Endothelial cell of umbilical vein (primary cell): ENCODE measurements at regions of chr7 and their contacts with region 1.

Region 1: DNA sequence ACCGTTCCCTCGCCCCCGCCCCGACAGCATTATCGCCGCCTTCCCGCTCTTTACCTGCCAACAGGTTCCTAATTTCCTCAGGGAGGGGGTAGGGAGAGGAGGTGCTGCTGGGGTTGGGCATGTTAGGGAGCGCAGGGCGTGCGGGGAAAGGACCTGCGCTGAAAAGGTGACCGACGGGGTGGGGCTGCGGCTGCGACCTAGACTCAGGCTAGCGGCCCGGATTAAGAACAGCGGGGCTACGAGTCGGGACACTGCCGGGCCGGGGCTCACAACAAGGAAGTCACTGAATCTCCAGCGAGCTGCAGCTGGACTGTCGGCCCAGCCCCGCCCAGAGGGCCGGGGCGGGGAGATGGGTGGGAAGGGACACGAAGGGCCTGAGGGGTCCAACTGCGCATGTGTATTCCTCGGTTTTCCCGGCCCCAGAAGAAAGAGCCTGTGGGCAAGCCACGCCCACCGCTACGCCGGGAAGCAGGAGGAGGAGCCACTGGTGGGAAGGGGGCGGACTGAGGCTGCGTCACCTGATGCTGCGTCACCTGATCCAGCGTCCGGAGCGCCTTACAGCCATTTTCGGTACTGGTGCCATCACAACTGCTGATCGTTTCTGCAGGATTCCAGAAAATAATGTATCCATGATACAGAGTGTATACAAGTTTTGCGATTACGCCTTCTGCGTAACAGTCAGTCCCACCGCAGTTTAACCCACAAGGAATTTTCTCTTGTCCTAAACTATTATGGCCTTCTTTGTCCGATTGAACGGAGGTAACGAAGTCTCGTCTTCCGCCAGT is at the start of gene SKAP2:
- DNase-seq: peak; percentile 99
- H3K4me3 ChIP-seq: peak within 1 kb of the TSS; percentile 59 to 85 (median 72)
- H3K27ac ChIP-seq: peak within 1 kb of the TSS; percentile 90
- H3K4me1 ChIP-seq: peaks cover 15% of the 10 kb centered on the region
- H3K27me3 ChIP-seq: no peaks in the 10 kb centered on the region
- CTCF ChIP-seq: no peak
- POLR2A ChIP-seq: peak; percentile 99
- total RNA-seq, gene SKAP2: 27.6 and 30.5 TPM in 2 replicates

Region 2: GRCh38 chr7:25862260-25863037 is 1002.1 kb before region 1 on chr7:
- CTCF ChIA-PET with region 1: no interaction called
- POLR2A ChIA-PET with region 1: no interaction called
- dilution Hi-C with region 1: no loop called
- intact Hi-C with region 1: loop called (anchors 5 kb)
- DNase-seq: peak; percentile 100
- H3K4me3 ChIP-seq: peak overlapping the region in 1 of 3 experiments; percentile 43
- H3K27ac ChIP-seq: no peak overlapping the region
- H3K4me1 ChIP-seq: peaks cover 6% of the 10 kb centered on the region
- H3K27me3 ChIP-seq: peaks cover 60 to 83% of the 10 kb centered on the region in 2 experiments
- CTCF ChIP-seq: no peak
- POLR2A ChIP-seq: no peak

Region 3: DNA sequence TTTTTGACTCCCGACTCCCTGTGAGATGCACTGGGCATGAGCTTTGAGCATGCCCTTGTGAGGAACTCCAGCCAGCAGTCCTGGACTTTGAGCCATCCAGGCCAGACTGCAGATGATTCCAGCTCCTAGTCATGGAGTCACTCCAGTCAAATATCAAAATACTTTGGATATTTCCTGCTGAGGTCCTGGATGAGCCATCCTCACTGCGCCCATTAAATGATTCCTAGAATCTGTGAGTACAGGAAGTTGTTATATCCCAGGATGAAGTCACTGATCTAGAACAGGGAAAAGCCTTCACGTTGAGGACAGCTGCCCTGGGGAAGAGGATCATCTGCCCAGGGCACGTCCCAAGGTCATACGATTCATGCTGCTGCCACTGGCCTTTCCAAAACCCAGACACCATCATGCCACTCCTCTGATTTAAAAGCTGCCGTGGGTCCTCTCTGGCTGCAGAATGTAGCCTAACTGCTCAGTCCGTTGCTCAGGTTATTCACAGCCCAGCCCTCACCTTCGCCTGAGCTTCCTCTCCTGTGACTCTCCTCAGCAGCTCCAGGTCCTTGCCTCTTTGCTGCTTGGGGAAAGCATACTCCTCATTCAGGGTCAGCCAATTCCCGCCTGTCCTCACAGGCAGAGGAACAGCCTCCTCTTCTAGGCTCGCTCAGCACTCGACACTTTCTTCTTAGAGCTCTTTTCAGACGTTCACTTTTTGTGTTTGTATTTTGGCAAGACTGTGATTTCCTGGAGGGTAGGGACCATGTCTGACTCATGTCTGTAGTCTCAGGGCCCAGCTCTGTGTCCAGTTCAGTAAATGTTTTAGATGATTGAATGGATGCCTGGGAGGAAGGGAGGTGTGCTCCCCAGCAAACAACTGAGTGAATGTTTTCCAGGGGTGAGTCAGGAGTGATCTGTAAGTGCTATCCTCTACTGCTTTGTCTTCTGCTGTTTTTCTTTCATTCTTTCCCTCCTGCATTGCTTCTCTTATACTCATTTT is 415.0 kb before region 1 on chr7:
- CTCF ChIA-PET with region 1: no interaction called
- POLR2A ChIA-PET with region 1: no interaction called
- dilution Hi-C with region 1: no loop called
- intact Hi-C with region 1: loop called (anchors 5 kb)
- DNase-seq: peak; percentile 96
- H3K4me3 ChIP-seq: no peak overlapping the region
- H3K27ac ChIP-seq: peak overlapping the region; percentile 80
- H3K4me1 ChIP-seq: peaks cover 37% of the 10 kb centered on the region
- H3K27me3 ChIP-seq: no peaks in the 10 kb centered on the region
- CTCF ChIP-seq: no peak
- POLR2A ChIP-seq: peak; percentile 54

Region 4: GRCh38 chr7:26853788-26854393 is 10.6 kb before region 1 on chr7:
- CTCF ChIA-PET with region 1: interaction called, 5 read pairs
- POLR2A ChIA-PET with region 1: interaction called, 5 read pairs
- dilution Hi-C with region 1: no loop called
- intact Hi-C with region 1: loop called (anchors 1 kb)
- DNase-seq: peak; percentile 69
- H3K4me3 ChIP-seq: no peak overlapping the region
- H3K27ac ChIP-seq: no peak overlapping the region
- H3K4me1 ChIP-seq: peaks cover 34% of the 10 kb centered on the region
- H3K27me3 ChIP-seq: no peaks in the 10 kb centered on the region
- CTCF ChIP-seq: peak; percentile 24 to 26
- POLR2A ChIP-seq: no peak

Region 5: DNA sequence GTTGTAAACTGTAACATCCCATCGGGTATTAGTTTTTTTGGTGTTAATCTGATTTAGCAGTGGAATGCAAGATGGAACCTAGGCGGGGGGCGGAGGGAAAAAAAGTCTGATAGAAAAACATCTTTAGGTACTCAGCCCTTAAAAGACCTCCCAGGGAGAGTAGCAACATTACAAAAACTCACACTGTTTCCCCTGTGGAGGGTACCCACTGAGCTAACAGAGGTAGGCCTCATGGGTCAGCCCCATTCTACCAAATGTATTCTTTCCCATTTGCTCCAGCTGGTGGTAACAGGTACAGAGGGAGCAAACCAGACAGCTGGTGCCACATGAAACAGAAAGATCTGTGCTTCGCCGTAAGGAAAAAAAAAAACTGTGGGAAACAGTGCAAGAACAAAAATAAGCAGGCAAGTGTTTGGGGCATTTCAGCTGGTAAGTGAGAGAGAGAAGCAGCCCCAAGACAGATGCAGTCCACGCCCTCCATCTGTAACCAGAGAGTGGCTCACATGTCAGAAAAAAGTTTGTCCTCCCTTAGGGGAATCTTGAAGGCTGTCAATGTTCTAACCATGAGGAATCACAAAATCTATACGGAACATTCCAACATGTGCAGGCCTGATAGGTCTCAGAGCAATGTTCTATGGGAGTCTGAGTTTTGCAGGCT is 166.0 kb after region 1 on chr7:
- CTCF ChIA-PET with region 1: no interaction called
- POLR2A ChIA-PET with region 1: no interaction called
- dilution Hi-C with region 1: no loop called
- intact Hi-C with region 1: no loop called
- DNase-seq: no peak
- H3K4me3 ChIP-seq: no peak overlapping the region
- H3K27ac ChIP-seq: no peak overlapping the region
- H3K4me1 ChIP-seq: peaks cover 10% of the 10 kb centered on the region
- H3K27me3 ChIP-seq: no peaks in the 10 kb centered on the region
- CTCF ChIP-seq: no peak
- POLR2A ChIP-seq: no peak

Region 6: GRCh38 chr7:27095897-27096767 is 231.6 kb after region 1 on chr7 and contains the start of gene HOXA1:
- CTCF ChIA-PET with region 1: interaction called, 124 read pairs
- POLR2A ChIA-PET with region 1: interaction called, 3 read pairs
- dilution Hi-C with region 1: no loop called
- intact Hi-C with region 1: loop called (anchors 1 kb)
- DNase-seq: peak; percentile 95
- H3K4me3 ChIP-seq: peak within 1 kb of the TSS; percentile 80 to 92 (median 86)
- H3K27ac ChIP-seq: peak within 1 kb of the TSS; percentile 93
- H3K4me1 ChIP-seq: peaks cover 48% of the 10 kb centered on the region
- H3K27me3 ChIP-seq: no peaks in the 10 kb centered on the region
- CTCF ChIP-seq: peak in 1 of 2 donors; percentile 10
- POLR2A ChIP-seq: peak; percentile 92
- total RNA-seq, gene HOXA1: 1.5 and 2.4 TPM in 2 replicates